ENCODE measurements at regions of chr7 and their contacts with region 1.

Region 1: GRCh38 chr7:14414274-14414986 is 425.0 kb upstream of the ETV1 start:
- DNase-seq: no peak
- ATAC-seq: peak; percentile 79

Region 2: GRCh38 chr7:14332155-14332554 is 82.3 kb before region 1 on chr7:
- intact Hi-C with region 1: loop called (anchors 5 kb)
- DNase-seq: peak; percentile 63
- ATAC-seq: peak; percentile 86

Region 3: GRCh38 chr7:14457568-14458453 is 43.4 kb after region 1 on chr7:
- intact Hi-C with region 1: no loop called
- DNase-seq: peak; percentile 60
- ATAC-seq: peak; percentile 74

Region 4: GRCh38 chr7:14875941-14876587 is 461.6 kb after region 1 on chr7:
- intact Hi-C with region 1: no loop called
- DNase-seq: no peak
- ATAC-seq: no peak